Gastrocnemius medialis (tissue), 4 donors: ENCODE measurements at regions of chr15 and their contacts with region 1.

Region 1: DNA sequence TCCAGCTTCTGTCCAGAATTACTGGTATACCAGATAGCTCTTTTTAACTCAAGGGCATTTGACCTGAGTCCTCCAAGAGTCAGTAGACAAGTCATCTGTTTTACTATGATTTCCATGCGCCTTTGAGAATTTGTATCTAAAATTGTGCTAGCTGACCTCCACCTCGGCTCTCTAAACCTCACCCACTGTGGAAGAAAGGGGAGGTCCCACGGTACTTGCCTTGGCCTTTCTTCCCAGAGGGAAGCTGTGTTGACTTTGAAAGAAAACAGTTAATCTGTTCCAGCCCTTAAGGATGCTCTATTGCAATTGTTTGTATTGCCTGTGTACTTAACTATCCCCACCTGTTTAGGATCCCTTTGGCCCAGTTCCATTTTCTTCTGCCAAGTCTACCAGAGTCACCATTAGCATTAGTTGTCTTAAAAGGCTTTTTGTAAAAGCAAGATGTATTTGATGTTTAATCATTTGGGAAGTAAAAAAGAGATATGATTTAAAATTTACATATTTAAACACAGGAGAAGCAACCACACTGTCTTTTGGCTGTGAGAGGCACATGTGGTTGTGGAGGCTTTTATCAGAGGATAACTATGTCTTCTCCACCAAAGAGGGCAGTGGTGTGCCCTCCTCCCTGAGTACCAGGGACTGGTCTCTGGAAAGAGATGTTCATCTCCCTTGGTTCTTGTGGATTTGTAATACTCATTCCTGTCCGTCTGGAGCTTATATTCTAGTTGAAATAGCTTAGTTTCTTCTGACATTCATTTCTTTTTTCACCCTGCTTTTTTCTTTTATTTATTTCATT is 88.8 kb downstream of the CRTC3 start:
- DNase-seq: no peak
- ATAC-seq: peak; percentile 13 to 37
- H3K4me3 ChIP-seq: no peak overlapping the region
- H3K27ac ChIP-seq: peak overlapping the region; percentile 41 to 91 (median 80)
- H3K4me1 ChIP-seq: peaks cover 18 to 40% of the 10 kb centered on the region in 2 donors
- H3K27me3 ChIP-seq: no peaks in the 10 kb centered on the region
- CTCF ChIP-seq: no peak
- POLR2A ChIP-seq: no peak

Region 2: DNA sequence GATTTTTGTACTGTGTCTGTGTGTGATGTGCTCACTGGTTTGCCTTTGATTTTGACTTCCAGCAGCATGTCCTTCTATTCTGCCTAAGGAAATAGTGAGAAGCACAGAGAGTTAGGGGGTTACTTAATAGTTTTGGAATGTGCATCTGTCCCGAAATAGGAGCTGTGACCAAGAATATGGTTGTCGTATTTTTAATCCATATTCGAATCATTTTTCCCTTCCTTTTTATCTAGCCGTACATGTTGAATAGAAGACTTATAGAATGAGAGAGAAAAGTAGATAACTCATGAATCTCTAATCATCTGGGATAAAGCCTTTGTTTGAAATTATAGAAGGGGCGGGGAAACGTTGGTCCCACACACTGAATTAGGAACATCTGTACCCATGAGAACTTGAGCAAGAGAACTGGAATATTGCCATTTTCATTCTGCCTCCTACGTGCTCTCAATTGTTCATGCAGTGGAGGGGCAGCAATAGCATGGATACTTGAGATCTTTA is 65.2 kb before region 1 on chr15:
- in situ Hi-C with region 1: no loop called
- intact Hi-C with region 1: loop called (anchors 5 kb)
- DNase-seq: no peak
- ATAC-seq: peak; percentile 66 to 77
- H3K4me3 ChIP-seq: peak overlapping the region in 2 of 4 donors; percentile 10 to 11
- H3K27ac ChIP-seq: peak overlapping the region; percentile 64 to 78 (median 70)
- H3K4me1 ChIP-seq: peaks cover 40 to 57% of the 10 kb centered on the region in 2 donors
- H3K27me3 ChIP-seq: no peaks in the 10 kb centered on the region
- CTCF ChIP-seq: no peak
- POLR2A ChIP-seq: peak in 1 of 2 donors; percentile 31

Region 3: DNA sequence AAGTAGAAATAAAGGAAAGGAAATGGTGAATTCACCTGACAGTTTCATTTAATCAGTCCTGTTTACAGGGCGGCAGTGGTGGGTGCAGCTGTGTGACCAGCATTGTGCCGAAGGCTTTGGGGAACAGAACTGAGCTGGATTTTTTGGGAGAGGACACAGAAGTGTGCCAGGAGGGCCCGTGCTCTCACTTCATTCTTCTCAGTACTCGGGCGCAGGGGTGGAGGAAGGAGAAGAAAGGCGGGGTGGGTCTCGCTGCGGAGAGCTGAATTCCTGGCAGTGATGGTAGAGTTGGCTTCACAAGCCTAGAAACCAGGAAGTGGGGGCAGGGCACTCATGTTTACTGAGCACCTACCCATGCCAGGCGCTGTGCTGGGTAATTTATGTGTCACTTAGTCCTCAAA is 24.2 kb before region 1 on chr15:
- in situ Hi-C with region 1: no loop called
- intact Hi-C with region 1: no loop called
- DNase-seq: peak; percentile 71 to 75
- ATAC-seq: peak in 1 of 2 donors; percentile 31
- H3K4me3 ChIP-seq: peak overlapping the region in 2 of 4 donors; percentile 6 to 11
- H3K27ac ChIP-seq: peak overlapping the region; percentile 44 to 83 (median 68)
- H3K4me1 ChIP-seq: peaks cover 60 to 79% of the 10 kb centered on the region in 2 donors
- H3K27me3 ChIP-seq: no peaks in the 10 kb centered on the region
- CTCF ChIP-seq: no peak
- POLR2A ChIP-seq: no peak